MCF 10A (cell line): ENCODE measurements at regions of chr7 and their contacts with region 1.

Region 1: DNA sequence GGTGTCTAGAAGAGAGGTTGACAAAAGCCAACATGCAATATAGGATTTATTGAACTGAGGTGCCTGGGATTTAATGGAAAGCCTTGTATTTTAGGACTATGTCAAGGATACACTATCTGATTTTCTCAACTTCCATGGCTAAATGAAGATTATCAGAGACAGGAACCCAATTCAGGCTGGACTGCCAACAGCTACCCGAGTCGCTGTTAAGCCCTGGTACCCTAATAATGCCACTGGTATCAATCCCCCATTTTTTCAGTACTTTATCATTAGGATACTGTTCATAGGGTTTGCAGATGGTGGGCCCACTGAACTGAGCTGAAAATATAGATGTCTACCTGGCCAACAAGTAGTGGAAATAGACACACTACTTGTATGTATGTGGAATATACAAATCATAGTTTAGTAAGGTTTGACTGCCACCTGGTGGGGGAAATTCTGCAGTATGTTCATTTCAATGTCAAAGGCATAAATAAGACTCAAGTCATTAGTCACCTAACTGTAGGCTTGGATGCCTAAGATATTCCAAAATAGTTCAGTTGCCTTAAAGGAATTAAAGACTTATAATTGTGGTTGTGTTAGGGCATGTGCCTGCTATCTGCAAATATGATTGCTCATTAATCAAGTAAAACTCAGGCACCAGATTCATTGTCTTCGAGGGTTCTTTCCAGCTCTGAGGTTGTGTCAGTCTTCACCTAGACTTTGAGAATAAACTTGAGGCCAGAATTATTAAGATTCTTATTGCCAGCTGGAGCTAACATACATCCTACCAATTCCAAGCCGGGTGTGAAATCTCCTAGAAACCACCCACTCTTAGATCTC is 34.1 kb upstream of the NOBOX start:
- DNase-seq: peak; percentile 74
- H3K4me3 Mint-ChIP-seq: no peak overlapping the region
- H3K27ac Mint-ChIP-seq: no peak overlapping the region
- H3K4me1 Mint-ChIP-seq: no peaks in the 10 kb centered on the region
- H3K27me3 Mint-ChIP-seq: no peaks in the 10 kb centered on the region
- CTCF ChIP-seq: peak; percentile 67

Region 2: DNA sequence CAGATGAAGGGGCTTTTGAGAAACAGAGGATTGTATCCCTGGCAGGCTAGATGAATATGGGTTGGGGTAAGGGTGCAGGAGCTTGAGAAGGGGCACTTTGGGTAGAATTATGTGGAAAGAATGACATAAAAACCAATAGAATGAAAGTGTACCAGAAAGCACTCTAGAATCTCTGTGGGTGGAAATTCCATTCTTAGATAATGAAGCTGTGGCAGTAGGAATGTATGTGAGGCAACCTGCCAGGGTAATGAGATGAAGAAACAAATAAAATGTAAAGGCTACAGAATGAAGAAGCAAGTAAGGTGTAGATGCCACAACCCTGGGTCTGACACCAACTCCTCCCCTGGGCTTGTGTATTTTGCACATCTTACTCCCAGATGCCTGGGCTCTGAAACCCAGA is 50.8 kb before region 1 on chr7:
- CTCF ChIA-PET with region 1: interaction called, 94 read pairs
- POLR2A ChIA-PET with region 1: no interaction called
- intact Hi-C with region 1: loop called (anchors 1 kb)
- DNase-seq: peak; percentile 29
- H3K4me3 Mint-ChIP-seq: no peak overlapping the region
- H3K27ac Mint-ChIP-seq: no peak overlapping the region
- H3K4me1 Mint-ChIP-seq: peaks cover 27% of the 10 kb centered on the region
- H3K27me3 Mint-ChIP-seq: no peaks in the 10 kb centered on the region
- CTCF ChIP-seq: no peak

Region 3: DNA sequence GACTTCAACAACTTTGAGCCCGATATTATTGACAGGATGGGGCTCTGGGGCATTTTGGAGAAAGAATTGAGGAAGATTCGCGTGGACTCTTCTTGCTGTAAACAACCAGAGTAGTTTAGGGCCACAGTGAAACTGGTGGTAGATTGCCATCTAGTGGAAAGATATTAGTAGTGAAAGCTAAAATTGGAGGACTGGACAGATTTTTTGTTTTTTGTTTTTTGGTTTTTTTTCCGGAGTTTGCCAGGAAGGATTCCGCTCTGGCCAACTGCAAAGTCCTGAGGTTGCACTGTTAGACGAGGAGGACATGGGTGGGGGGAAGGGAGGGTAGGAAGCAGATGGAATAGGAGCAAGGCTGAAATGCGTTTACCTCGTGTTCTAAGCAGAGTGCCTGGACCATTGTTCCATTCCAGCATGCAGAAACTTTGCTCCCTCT is 45.7 kb before region 1 on chr7:
- CTCF ChIA-PET with region 1: interaction called, 94 read pairs
- POLR2A ChIA-PET with region 1: interaction called, 9 read pairs
- intact Hi-C with region 1: loop called (anchors 1 kb)
- DNase-seq: peak; percentile 69
- H3K4me3 Mint-ChIP-seq: no peak overlapping the region
- H3K27ac Mint-ChIP-seq: no peak overlapping the region
- H3K4me1 Mint-ChIP-seq: peaks cover 8% of the 10 kb centered on the region
- H3K27me3 Mint-ChIP-seq: no peaks in the 10 kb centered on the region
- CTCF ChIP-seq: peak; percentile 60

Region 4: GRCh38 chr7:144397086-144397485 is 40.5 kb before region 1 on chr7:
- CTCF ChIA-PET with region 1: interaction called, 94 read pairs
- POLR2A ChIA-PET with region 1: interaction called, 9 read pairs
- intact Hi-C with region 1: no loop called
- DNase-seq: no peak
- H3K4me3 Mint-ChIP-seq: no peak overlapping the region
- H3K27ac Mint-ChIP-seq: no peak overlapping the region
- H3K4me1 Mint-ChIP-seq: no peaks in the 10 kb centered on the region
- H3K27me3 Mint-ChIP-seq: no peaks in the 10 kb centered on the region
- CTCF ChIP-seq: no peak

Region 5: DNA sequence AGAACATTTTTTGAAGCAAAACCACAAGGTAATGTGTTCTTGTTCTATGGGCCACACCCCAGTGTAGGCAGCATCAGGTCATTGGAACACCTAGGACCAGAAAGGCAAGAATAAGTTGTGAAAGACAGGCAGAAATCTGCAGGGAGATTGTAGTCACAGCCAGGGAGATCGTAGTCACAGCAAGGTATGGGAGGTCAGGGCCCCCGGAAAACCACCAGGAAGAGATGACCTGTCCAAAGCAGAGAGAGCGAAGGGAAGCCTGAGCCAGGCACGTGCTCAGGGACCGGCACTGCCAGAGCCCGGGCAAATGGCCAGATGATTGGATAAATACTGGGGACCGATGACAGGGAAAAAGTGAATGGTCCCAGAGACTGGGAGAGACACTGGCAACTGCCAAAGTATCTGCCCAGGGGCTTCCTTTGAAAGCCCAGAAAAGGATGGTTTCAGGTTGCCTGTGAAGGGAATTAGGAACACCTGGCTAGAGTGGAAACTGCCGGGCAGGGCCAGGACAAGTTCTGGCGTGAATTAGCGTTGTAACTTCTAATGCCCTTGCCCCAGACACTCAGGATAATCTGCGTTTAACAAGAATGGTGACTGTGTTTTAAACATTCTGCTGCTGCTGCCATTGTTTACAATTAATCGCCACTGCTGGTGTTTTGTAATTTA is 30.2 kb before region 1 on chr7:
- CTCF ChIA-PET with region 1: interaction called, 17 read pairs
- POLR2A ChIA-PET with region 1: interaction called, 3 read pairs
- intact Hi-C with region 1: loop called (anchors 1 kb)
- DNase-seq: peak; percentile 81
- H3K4me3 Mint-ChIP-seq: peak overlapping the region; percentile 49
- H3K27ac Mint-ChIP-seq: peak overlapping the region; percentile 80
- H3K4me1 Mint-ChIP-seq: peaks cover 23% of the 10 kb centered on the region
- H3K27me3 Mint-ChIP-seq: no peaks in the 10 kb centered on the region
- CTCF ChIP-seq: no peak

Region 6: DNA sequence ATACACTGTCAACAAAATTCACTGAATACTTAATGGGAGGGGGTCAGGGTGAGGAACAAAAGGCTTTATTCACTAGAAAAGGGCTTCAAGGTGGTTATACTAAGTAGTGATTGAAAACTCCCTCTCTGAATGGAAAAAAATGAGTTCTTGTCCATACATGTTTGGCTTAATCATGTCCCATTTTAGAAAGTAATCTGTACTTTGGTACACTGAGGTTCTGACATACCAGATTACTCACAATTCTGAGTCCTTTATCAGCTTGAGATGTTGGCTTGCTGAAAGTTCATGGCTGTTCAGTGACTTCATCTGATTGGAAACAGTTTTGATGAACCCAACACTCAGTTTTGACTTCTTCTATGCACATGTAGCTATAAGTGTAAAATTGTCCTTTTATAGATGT is 21.2 kb before region 1 on chr7:
- CTCF ChIA-PET with region 1: interaction called, 31 read pairs
- POLR2A ChIA-PET with region 1: no interaction called
- intact Hi-C with region 1: no loop called
- DNase-seq: peak; percentile 22
- H3K4me3 Mint-ChIP-seq: no peak overlapping the region
- H3K27ac Mint-ChIP-seq: no peak overlapping the region
- H3K4me1 Mint-ChIP-seq: peaks cover 13% of the 10 kb centered on the region
- H3K27me3 Mint-ChIP-seq: no peaks in the 10 kb centered on the region
- CTCF ChIP-seq: no peak